GM13976 (cell line): ENCODE measurements at regions of chr2 and their contacts with region 1.

Region 1: GRCh38 chr2:33033606-33034081 is 86.9 kb downstream of the LTBP1 start:
- DNase-seq: no peak
- CTCF ChIP-seq: peak; percentile 9

Region 2: GRCh38 chr2:33372940-33373553 is 339.4 kb after region 1 on chr2:
- in situ Hi-C with region 1: loop called (anchors 10 kb)
- DNase-seq: peak; percentile 69
- CTCF ChIP-seq: peak; percentile 56